MCF 10A (cell line): ENCODE measurements at regions of chr12 and their contacts with region 1.

Region 1: DNA sequence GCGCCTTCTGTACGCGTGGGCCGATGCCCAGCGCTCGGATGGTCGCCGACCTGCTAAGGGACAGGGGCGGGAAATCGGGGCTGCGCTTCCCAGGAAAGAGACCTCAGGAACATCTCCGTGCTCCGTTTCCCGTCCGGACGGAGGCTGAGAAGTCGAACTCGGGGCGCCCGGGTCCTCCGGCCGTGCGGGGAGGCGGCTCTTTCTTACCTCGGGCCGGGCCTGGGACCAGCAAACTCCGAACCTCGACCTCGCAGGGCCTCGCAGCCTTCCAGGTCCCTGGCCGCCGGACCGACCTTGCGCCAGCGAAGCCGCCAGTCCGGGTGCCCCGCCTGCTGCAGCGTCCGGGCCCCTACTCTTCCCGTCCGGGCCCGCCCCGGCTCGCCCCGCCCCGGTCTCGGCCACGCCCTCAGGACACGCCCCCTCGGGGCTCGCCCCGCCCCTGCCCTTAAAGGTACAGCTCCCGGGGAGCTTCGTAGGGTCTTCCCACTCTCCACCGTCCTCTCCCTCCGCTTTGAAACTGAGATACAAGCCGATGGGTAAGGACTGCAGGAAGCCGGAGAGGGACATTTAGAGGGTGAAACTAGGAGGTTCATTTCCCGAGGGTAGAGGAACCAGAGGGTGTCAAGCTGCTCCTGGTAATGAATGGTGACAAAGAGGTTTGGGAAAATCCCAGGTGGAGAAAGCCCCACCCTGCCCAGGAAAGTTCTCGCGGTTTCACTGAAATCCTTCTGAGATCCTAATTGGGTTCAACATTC is at the start of gene SLC8B1:
- DNase-seq: peak; percentile 85
- H3K4me3 Mint-ChIP-seq: peak within 1 kb of the TSS; percentile 81
- H3K27ac Mint-ChIP-seq: peak within 1 kb of the TSS; percentile 75
- H3K4me1 Mint-ChIP-seq: peaks cover under 1% of the 10 kb centered on the region
- H3K27me3 Mint-ChIP-seq: no peaks in the 10 kb centered on the region
- CTCF ChIP-seq: no peak
- total RNA-seq, gene SLC8B1: 15.7 and 19.6 TPM in 2 replicates

Region 2: DNA sequence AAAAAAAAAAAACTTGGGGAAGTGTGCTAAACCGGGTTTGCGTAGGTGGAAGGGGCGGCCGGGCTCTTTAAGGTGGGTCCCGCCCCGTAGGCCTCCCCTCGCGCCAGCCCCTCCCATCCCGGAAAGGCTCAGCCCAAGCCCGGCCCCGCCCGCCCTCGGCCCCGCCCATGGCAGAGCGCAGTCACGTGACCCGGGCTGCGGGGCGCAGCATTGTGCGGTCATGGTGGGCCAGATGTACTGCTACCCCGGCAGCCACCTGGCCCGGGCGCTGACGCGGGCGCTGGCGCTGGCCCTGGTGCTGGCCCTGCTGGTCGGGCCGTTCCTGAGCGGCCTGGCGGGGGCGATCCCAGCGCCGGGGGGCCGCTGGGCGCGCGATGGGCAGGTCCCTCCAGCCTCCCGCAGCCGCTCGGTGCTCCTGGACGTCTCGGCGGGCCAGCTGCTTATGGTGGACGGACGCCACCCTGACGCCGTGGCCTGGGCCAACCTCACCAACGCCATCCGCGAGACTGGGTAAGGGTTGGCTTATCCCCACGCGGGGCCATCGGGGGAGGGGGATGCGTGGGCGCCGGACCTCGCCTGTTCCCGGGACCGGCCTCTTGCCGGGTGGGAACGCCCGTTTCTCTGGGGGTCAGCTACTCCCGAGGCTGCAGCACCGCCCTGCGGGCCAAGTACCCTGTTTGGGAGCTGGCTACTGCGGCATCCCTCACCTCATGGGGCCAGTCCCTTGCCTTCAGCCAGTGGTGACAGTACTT is 23.6 kb after region 1 on chr12 and contains the start of gene PLBD2:
- CTCF ChIA-PET with region 1: interaction called, 3 read pairs
- POLR2A ChIA-PET with region 1: interaction called, 18 read pairs
- intact Hi-C with region 1: loop called (anchors 2 kb)
- DNase-seq: peak; percentile 91
- H3K4me3 Mint-ChIP-seq: peak within 1 kb of the TSS; percentile 85
- H3K27ac Mint-ChIP-seq: peak within 1 kb of the TSS; percentile 83
- H3K4me1 Mint-ChIP-seq: peaks cover 9% of the 10 kb centered on the region
- H3K27me3 Mint-ChIP-seq: no peaks in the 10 kb centered on the region
- CTCF ChIP-seq: no peak
- total RNA-seq, gene PLBD2: 18.1 and 24.0 TPM in 2 replicates

Region 3: GRCh38 chr12:113601656-113602263 is 266.8 kb after region 1 on chr12:
- CTCF ChIA-PET with region 1: no interaction called
- POLR2A ChIA-PET with region 1: no interaction called
- intact Hi-C with region 1: no loop called
- DNase-seq: peak; percentile 14
- H3K4me3 Mint-ChIP-seq: no peak overlapping the region
- H3K27ac Mint-ChIP-seq: no peak overlapping the region
- H3K4me1 Mint-ChIP-seq: no peaks in the 10 kb centered on the region
- H3K27me3 Mint-ChIP-seq: peaks cover 13% of the 10 kb centered on the region
- CTCF ChIP-seq: no peak